Right ventricle myocardium superior (tissue), 1 donor: ENCODE measurements at regions of chr11 and their contacts with region 1.

Region 1: GRCh38 chr11:47837292-47837691 is 10.9 kb downstream of the NUP160 start:
- DNase-seq: no peak
- ATAC-seq: no peak

Region 2: GRCh38 chr11:47565340-47566148 is 271.7 kb before region 1 on chr11 and contains the start of gene PTPMT1:
- intact Hi-C with region 1: no loop called
- DNase-seq: peak; percentile 88
- ATAC-seq: peak; percentile 98
- total RNA-seq, gene PTPMT1: 20.9 TPM

Region 3: DNA sequence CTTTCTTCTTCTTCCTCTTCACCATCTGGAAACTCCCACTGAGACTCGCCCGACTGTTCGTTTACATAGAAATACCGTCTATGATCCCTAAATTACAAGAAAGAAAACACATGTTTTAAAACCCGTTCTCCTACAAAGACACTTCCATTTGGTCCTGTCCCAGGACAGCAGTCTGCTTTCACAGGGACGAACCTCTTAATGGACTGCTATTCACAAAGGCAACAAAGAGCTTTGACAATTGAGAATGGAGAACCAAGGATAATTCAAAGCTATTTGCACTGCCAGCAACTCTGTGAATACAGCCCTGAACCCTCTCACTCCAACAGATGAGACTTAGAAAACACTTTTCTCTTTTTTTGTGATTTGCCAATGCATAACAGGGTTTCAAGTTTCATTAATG is 105.8 kb before region 1 on chr11:
- intact Hi-C with region 1: loop called (anchors 10 kb)
- DNase-seq: no peak
- ATAC-seq: no peak

Region 4: GRCh38 chr11:47941907-47942558 is 104.7 kb after region 1 on chr11:
- intact Hi-C with region 1: no loop called
- DNase-seq: no peak
- ATAC-seq: no peak